ENCODE measurements at regions of chr9 and their contacts with region 1.

Region 1: GRCh38 chr9:96327694-96328352 is 25.8 kb upstream of the HSD17B3 start:
- DNase-seq: no peak
- ATAC-seq: peak; percentile 34 to 82

Region 2: GRCh38 chr9:96667361-96667728 is 339.5 kb after region 1 on chr9:
- intact Hi-C with region 1: loop called in 1 of 2 experiments (anchors 2 kb)
- DNase-seq: no peak
- ATAC-seq: no peak